GM13976 (cell line): ENCODE measurements at regions of chr15 and their contacts with region 1.

Region 1: DNA sequence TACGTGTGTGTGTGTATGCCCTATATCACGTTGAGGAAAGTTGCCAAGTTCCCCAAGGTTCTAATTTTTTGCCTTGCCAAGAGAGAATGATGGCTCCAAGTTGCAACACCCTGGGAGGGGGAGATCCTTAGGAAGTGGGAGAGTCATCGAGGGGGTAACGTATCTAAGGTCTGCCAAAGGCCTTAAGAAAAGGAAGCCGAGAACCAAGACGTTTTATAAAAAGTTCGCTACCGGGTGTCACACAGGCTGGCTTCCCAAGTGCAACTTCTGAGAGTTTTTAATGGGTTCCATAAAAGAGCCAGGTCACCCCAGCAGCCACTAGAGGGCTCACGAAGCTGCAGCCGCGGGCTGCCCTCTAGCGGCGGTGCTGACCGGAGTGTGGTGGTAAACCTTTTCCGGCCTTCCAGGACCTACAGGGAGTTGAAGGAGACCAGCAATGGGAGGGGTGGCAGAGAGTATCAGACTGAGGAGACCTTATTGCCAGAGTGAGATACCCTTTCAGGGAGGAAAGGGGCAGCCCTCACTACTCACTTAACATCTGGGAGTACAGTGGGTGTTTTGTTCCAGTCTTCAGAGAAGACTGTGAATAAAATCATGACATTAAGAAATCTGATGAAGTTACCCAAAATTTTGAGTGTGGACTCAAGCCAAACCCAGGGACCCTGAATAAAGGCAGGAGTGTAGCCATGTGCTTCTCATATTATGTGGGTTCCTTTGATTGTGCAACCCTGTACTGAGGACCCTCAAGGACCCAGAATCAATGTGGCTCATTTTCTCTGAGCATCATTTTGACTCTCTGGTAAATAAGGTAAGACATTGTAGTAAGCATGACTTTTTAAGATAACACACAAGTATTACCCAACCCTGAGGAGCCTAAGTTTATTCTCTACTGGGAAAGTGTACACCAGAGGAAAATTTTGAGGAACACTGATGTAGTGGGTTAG is 2.5 kb upstream of the RFX7 start:
- DNase-seq: peak; percentile 78
- CTCF ChIP-seq: peak; percentile 100

Region 2: GRCh38 chr15:56365075-56365711 is 119.0 kb after region 1 on chr15 and contains the start of gene TEX9:
- in situ Hi-C with region 1: loop called (anchors 10 kb)
- DNase-seq: peak; percentile 90
- CTCF ChIP-seq: no peak

Region 3: GRCh38 chr15:56759450-56759845 is 513.3 kb after region 1 on chr15:
- in situ Hi-C with region 1: no loop called
- DNase-seq: no peak
- CTCF ChIP-seq: no peak